Left ventricle myocardium inferior (tissue), 1 donor: ENCODE measurements at regions of chrX and their contacts with region 1.

Region 1: DNA sequence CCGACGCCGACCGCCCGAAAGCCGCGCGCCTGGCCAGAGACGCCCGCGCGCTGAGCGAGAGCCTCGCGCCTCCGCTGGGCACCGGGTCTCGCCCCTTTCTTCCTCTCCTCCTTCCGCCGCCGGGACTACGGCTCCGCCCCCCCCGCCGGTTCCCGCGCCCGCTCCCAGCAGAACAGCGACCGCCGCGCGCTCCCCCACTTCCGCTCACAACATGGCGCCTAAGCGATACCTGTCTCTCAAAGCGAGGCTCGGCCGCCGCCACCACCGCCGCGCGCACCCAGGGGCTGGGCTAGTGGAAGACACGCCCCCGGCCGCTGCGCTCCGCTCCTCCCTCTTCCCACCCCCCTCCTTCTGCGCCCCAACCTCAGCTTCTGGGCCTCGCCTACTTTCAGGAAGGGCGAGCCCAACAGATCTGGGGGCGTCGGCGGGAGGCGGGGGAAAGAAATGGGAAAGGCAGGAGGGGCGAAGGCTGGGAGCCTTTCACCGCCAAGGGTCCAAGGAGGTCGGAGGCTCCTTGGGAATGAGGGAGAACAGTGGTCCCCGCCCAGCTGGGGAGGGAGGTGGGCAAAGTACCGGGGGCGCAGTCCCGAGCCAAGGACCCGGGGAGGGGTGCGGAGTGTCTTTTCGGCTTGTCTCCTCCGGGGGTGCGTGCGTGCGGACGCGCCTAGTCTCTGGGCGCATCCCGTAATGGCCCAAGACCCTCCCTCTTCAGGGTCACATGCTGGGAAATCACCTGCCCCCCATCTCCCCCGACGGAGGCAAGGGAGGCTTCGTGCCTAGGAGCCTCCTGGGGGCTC is at the start of gene RPS6KA3:
- DNase-seq: peak; percentile 90
- H3K4me3 ChIP-seq: peak within 1 kb of the TSS; percentile 76
- H3K27ac ChIP-seq: peak within 1 kb of the TSS; percentile 88
- H3K4me1 ChIP-seq: peaks cover 28% of the 10 kb centered on the region
- H3K27me3 ChIP-seq: no peaks in the 10 kb centered on the region
- CTCF ChIP-seq: no peak
- total RNA-seq, gene RPS6KA3: 33.6 TPM

Region 2: DNA sequence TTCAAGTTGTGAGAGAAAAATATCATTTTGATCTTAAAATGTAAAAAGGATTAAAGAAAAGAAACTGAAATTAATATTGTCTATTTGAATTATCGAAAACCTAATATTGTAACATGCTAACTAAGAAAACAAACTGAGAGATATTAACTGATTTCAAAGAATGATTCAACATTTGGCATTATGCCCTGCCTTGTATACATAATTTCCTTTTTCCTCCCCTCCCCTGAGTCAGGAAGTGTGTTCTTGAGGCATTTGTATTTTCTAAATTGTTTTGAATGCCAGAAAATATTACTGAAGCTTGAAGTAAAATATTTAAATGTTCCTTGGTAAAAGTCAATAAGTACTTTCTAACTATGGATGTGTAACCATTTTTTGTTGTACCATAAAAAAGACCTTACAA is 49.7 kb before region 1 on chrX:
- intact Hi-C with region 1: loop called (anchors 10 kb)
- DNase-seq: no peak
- H3K4me3 ChIP-seq: peak overlapping the region; percentile 57
- H3K27ac ChIP-seq: peak overlapping the region; percentile 76
- H3K4me1 ChIP-seq: peaks cover 33% of the 10 kb centered on the region
- H3K27me3 ChIP-seq: no peaks in the 10 kb centered on the region
- CTCF ChIP-seq: no peak

Region 3: DNA sequence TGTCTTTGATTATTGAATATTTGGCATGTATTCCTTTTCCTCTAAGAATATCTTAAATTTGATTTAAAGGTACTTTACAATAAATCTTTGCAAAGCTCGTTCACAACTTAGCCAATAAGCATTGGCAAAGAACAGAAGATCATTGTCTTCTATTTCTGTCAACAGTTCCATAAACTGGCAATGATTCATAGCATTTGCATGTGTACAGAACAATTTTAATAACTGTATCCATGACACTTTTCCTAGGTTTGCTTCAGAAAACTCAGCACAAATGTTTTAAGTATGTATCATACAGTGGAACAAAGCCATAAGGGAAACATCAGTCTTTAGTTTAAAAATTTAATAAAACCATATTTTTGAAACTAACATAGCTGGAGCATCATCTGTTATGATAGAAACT is 462.4 kb after region 1 on chrX:
- intact Hi-C with region 1: no loop called
- DNase-seq: no peak
- H3K4me3 ChIP-seq: no peak overlapping the region
- H3K27ac ChIP-seq: no peak overlapping the region
- H3K4me1 ChIP-seq: no peaks in the 10 kb centered on the region
- H3K27me3 ChIP-seq: no peaks in the 10 kb centered on the region
- CTCF ChIP-seq: no peak